ENCODE measurements at regions of chr7 and their contacts with region 1.

Region 1: GRCh38 chr7:12458520-12459131 is 55.0 kb upstream of the VWDE start:
- DNase-seq: peak; percentile 68
- H3K4me3 ChIP-seq: no peak overlapping the region
- H3K27ac ChIP-seq: no peak overlapping the region
- H3K4me1 ChIP-seq: no peaks in the 10 kb centered on the region; a peak in 1 of 4 replicates
- H3K27me3 ChIP-seq: no peaks in the 10 kb centered on the region
- CTCF ChIP-seq: peak; percentile 97
- EP300 ChIP-seq: no peak
- RAD21 ChIP-seq: peak; percentile 93

Region 2: DNA sequence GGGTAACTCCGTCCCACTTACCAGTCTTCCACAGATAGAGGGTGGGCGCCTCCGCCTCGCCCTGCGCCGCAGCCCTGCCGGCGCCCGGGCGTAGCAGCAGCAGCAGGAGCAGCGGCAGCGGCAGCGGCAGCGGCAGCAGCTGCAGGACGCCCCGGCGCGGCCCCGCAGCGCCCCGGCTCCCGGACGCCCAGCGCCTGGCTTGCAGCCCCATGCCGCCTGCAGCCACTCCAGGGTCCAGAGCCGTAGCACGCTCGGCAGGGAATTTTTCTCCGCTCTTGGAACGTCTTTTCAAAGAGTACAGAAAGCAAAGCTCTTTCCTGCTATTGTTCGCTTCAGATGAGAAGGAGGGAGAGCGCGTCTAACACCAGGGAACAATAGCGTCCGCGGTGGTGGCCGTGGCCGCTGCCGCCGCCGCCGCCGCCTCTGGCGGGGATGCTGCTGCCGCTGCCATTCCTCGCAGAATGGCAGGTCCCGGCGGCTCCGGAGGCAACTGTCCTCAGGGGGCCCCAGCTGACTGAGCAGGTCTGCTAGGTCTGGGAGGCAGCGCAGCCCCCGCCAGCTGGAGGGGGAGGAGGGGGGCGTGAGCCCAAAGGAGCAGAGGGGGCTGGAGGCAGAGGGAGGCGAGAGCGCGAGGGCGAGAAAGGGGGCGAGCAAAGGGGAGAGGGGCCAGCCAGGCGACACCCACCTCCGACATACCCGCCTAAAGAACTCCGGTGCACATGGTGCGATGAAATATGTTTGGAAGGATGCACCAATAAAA is 626.7 kb before region 1 on chr7 and contains the start of gene THSD7A:
- CTCF ChIA-PET with region 1: interaction called, 11 read pairs
- POLR2A ChIA-PET with region 1: no interaction called
- DNase-seq: peak; percentile 92
- H3K4me3 ChIP-seq: peak within 1 kb of the TSS; percentile 68 to 69
- H3K27ac ChIP-seq: peak within 1 kb of the TSS in 1 of 2 experiments; percentile 99; a peak in 2 of 4 replicates
- H3K4me1 ChIP-seq: peaks cover 0 to 20% of the 10 kb centered on the region in 2 experiments; a peak in 2 of 4 replicates
- H3K27me3 ChIP-seq: no peaks in the 10 kb centered on the region
- CTCF ChIP-seq: 0 out of 2 replicates have a peak, but pooled peaks have one; percentile 9
- EP300 ChIP-seq: no peak
- RAD21 ChIP-seq: peak; percentile 10; the same call in 1 of the 2 replicates
- polyA plus RNA-seq, gene THSD7A: 0.16 and 0.49 TPM in 2 replicates

Region 3: GRCh38 chr7:12178317-12178716 is 280.3 kb before region 1 on chr7:
- CTCF ChIA-PET with region 1: no interaction called
- POLR2A ChIA-PET with region 1: no interaction called
- DNase-seq: no peak
- H3K4me3 ChIP-seq: no peak overlapping the region
- H3K27ac ChIP-seq: no peak overlapping the region
- H3K4me1 ChIP-seq: no peaks in the 10 kb centered on the region
- H3K27me3 ChIP-seq: no peaks in the 10 kb centered on the region
- CTCF ChIP-seq: no peak
- EP300 ChIP-seq: no peak
- RAD21 ChIP-seq: no peak

Region 4: DNA sequence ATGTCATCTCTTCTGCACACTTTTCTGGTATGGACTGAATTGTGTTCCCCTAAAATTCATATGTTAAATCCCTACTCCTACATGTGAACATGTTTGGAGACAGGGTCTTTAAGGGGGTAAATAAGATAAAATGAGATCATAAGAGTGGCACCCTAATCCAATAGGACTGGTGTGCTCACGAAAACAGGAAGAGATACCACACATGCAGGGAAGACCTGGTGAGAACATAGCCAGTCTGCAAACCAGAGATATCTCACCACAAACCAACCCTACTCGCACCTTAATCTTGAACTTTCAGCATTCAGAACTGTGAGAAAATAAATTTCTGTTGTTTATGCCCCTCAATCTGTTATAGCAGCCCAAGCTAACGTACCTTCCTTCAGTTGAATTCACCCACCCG is 106.8 kb before region 1 on chr7:
- CTCF ChIA-PET with region 1: no interaction called
- POLR2A ChIA-PET with region 1: no interaction called
- DNase-seq: no peak
- H3K4me3 ChIP-seq: no peak overlapping the region
- H3K27ac ChIP-seq: no peak overlapping the region
- H3K4me1 ChIP-seq: no peaks in the 10 kb centered on the region
- H3K27me3 ChIP-seq: no peaks in the 10 kb centered on the region
- CTCF ChIP-seq: no peak
- EP300 ChIP-seq: no peak
- RAD21 ChIP-seq: no peak

Region 5: DNA sequence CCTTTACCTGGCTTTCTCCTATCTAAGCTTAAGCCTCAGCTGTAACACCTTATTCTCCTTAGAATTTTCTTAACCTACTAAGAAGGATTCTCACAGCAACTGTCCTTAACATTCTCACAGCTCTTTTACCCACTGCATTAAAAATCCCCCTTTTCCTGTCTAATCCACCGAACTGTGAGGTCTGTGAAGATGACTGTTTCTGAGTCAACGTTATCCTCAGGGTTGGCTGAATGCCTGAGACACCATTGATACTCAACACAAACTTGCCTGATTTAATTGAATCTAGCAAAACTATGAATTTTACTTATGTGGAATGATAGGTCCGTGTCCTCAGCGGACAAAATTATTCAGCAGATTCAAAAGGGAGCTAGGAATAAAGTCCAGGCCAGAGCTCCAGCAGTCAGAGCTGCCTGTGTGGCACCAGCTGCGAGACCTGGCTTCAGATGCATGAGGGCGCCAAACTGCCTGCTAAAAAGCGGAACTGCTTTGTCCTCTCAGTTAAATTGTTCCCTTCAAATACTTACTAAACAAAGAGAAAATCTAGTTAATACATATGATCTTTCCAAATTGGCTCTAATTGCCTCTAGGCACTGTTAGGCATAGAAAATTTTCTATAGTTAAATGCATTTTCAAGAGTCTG is 21.6 kb before region 1 on chr7:
- CTCF ChIA-PET with region 1: interaction called, 68 read pairs
- POLR2A ChIA-PET with region 1: no interaction called
- DNase-seq: peak; percentile 28
- H3K4me3 ChIP-seq: no peak overlapping the region
- H3K27ac ChIP-seq: peak overlapping the region in 1 of 2 experiments; percentile 43; a peak in 2 of 4 replicates
- H3K4me1 ChIP-seq: peaks cover 0 to 5% of the 10 kb centered on the region in 2 experiments; a peak in 2 of 4 replicates
- H3K27me3 ChIP-seq: 0 out of 2 replicates have a peak, but pooled peaks cover 4% of the 10 kb centered on the region
- CTCF ChIP-seq: peak; percentile 27; the same call in 1 of the 2 replicates
- EP300 ChIP-seq: no peak
- RAD21 ChIP-seq: peak; percentile 59

Region 6: DNA sequence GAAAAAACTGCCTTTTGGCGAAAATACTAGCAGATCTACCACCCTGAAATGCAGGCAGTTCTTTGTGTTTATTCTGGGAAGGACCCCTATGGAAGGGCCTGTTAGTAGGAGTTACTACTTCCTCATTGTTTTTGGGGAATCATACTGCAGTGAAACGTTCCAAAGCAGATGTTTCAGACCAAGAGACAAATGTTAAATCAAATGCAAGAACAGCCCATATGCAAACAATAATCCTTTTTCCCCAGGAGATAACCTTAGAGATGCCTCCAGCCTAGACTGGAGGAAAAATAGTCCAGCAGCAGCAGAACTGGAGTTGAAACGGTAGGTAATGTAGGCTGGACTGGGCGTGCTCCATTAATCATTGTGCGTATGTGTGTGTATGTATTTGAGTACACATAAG is 10.9 kb after region 1 on chr7:
- CTCF ChIA-PET with region 1: interaction called, 160 read pairs
- POLR2A ChIA-PET with region 1: no interaction called
- DNase-seq: no peak
- H3K4me3 ChIP-seq: no peak overlapping the region
- H3K27ac ChIP-seq: no peak overlapping the region
- H3K4me1 ChIP-seq: no peaks in the 10 kb centered on the region
- H3K27me3 ChIP-seq: no peaks in the 10 kb centered on the region
- CTCF ChIP-seq: no peak
- EP300 ChIP-seq: no peak
- RAD21 ChIP-seq: no peak

Region 7: GRCh38 chr7:12481722-12482121 is 23.1 kb after region 1 on chr7:
- CTCF ChIA-PET with region 1: interaction called, 160 read pairs
- POLR2A ChIA-PET with region 1: no interaction called
- DNase-seq: no peak
- H3K4me3 ChIP-seq: no peak overlapping the region
- H3K27ac ChIP-seq: no peak overlapping the region
- H3K4me1 ChIP-seq: no peaks in the 10 kb centered on the region
- H3K27me3 ChIP-seq: no peaks in the 10 kb centered on the region; the same call in 1 of the 2 replicates
- CTCF ChIP-seq: no peak
- EP300 ChIP-seq: no peak
- RAD21 ChIP-seq: no peak

Region 8: GRCh38 chr7:12504149-12504548 is 45.5 kb after region 1 on chr7:
- CTCF ChIA-PET with region 1: interaction called, 14 read pairs
- POLR2A ChIA-PET with region 1: no interaction called
- DNase-seq: no peak
- H3K4me3 ChIP-seq: no peak overlapping the region
- H3K27ac ChIP-seq: no peak overlapping the region
- H3K4me1 ChIP-seq: no peaks in the 10 kb centered on the region
- H3K27me3 ChIP-seq: no peaks in the 10 kb centered on the region
- CTCF ChIP-seq: no peak
- EP300 ChIP-seq: no peak
- RAD21 ChIP-seq: no peak

Region 9: DNA sequence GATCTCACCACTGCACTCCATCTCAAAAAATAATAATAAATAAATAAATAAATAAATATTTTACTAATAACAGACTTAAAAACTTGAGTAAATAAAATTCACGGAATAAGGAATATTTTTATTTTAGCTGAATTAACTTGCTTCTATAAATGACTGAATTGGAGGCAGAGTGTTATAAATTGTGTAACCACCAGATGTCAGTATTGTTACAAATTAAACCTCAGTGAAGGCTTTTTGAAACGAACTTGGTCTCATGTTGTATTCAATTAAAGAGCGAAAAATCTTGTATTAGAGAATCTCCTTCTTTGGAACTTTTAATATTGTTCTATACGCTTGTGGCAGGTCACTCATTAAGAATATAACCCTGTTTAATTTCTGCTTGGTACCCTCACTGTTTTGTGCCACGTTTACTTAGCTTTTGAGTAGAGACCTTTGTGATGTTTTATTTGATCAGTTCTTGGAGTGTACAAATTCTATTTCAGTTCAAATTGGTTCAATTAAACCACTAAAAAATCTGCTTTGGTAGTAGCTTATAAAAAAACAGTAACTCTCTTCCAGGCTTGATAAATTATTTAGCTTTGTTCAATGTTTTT is 66.3 kb after region 1 on chr7:
- CTCF ChIA-PET with region 1: interaction called, 17 read pairs
- POLR2A ChIA-PET with region 1: no interaction called
- DNase-seq: peak; percentile 47
- H3K4me3 ChIP-seq: no peak overlapping the region; a peak in 1 of 4 replicates
- H3K27ac ChIP-seq: no peak overlapping the region
- H3K4me1 ChIP-seq: no peaks in the 10 kb centered on the region
- H3K27me3 ChIP-seq: no peaks in the 10 kb centered on the region; the same call in 1 of the 2 replicates
- CTCF ChIP-seq: peak; percentile 85
- EP300 ChIP-seq: no peak
- RAD21 ChIP-seq: peak; percentile 89

Region 10: GRCh38 chr7:13024121-13024674 is 565.6 kb after region 1 on chr7:
- CTCF ChIA-PET with region 1: no interaction called
- POLR2A ChIA-PET with region 1: no interaction called
- DNase-seq: no peak
- H3K4me3 ChIP-seq: no peak overlapping the region
- H3K27ac ChIP-seq: no peak overlapping the region
- H3K4me1 ChIP-seq: no peaks in the 10 kb centered on the region
- H3K27me3 ChIP-seq: peaks cover 6% of the 10 kb centered on the region; the same call in 1 of the 2 replicates
- CTCF ChIP-seq: no peak
- EP300 ChIP-seq: no peak
- RAD21 ChIP-seq: no peak

Region 11: GRCh38 chr7:13279854-13280435 is 821.3 kb after region 1 on chr7:
- CTCF ChIA-PET with region 1: no interaction called
- POLR2A ChIA-PET with region 1: no interaction called
- DNase-seq: peak; percentile 23
- H3K4me3 ChIP-seq: no peak overlapping the region
- H3K27ac ChIP-seq: no peak overlapping the region
- H3K4me1 ChIP-seq: no peaks in the 10 kb centered on the region
- H3K27me3 ChIP-seq: no peaks in the 10 kb centered on the region; the same call in 1 of the 2 replicates
- CTCF ChIP-seq: peak; percentile 79
- EP300 ChIP-seq: no peak
- RAD21 ChIP-seq: peak; percentile 73